CD8-positive, alpha-beta T cell (primary cell): ENCODE measurements at regions of chr15 and their contacts with region 1.

Region 1: GRCh38 chr15:63487076-63487757 is 17.2 kb upstream of the USP3 start:
- DNase-seq: peak; percentile 83 to 95 (median 88)
- ATAC-seq: peak; percentile 97
- H3K4me3 ChIP-seq: no peak overlapping the region
- H3K4me3 Mint-ChIP-seq: peak overlapping the region; percentile 40
- H3K27ac ChIP-seq: no peak overlapping the region
- H3K27ac Mint-ChIP-seq: peak overlapping the region; percentile 80
- H3K4me1 ChIP-seq: peaks cover 48% of the 10 kb centered on the region
- H3K4me1 Mint-ChIP-seq: peaks cover 62% of the 10 kb centered on the region
- H3K27me3 ChIP-seq: no peaks in the 10 kb centered on the region
- H3K27me3 Mint-ChIP-seq: no peaks in the 10 kb centered on the region
- CTCF ChIP-seq: peak; percentile 98

Region 2: DNA sequence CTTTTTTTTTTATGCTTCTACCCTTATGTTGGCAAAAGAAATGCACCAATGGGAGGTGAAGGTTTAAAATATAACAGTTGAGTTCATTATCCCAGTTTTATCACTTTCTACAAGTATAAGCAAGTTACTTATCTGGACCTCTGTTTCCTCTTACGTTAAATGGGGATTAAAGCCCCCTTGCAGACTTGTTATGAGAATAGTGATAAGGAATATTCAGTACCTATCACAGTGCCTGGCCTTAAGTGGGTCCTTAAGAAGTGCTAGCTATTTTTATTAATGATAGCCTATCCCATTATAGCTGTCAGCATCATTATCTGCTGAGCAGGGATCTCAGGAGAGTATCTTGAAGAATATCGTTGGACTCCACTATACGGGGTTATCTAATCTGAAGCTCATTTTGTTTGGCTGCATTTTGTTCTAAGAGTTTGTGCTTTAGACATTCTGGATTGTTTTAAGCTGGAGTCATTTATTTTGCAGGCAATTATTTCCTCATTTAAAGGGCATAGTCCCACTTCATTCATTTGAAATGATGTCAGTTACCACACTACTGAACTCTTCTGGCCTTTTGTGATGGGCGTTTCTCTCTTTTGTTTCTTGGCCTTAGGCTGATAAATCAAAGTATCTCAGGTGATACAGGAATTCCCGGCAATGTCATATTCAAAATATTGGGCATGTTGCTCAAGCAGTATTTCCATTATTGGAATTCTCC is 269.0 kb before region 1 on chr15:
- CTCF ChIA-PET with region 1: no interaction called
- POLR2A ChIA-PET with region 1: no interaction called
- intact Hi-C with region 1: no loop called
- DNase-seq: no peak
- ATAC-seq: no peak
- H3K4me3 ChIP-seq: no peak overlapping the region
- H3K4me3 Mint-ChIP-seq: no peak overlapping the region
- H3K27ac ChIP-seq: no peak overlapping the region
- H3K27ac Mint-ChIP-seq: no peak overlapping the region
- H3K4me1 ChIP-seq: peaks cover 2% of the 10 kb centered on the region
- H3K4me1 Mint-ChIP-seq: peaks cover 68% of the 10 kb centered on the region
- H3K27me3 ChIP-seq: no peaks in the 10 kb centered on the region
- H3K27me3 Mint-ChIP-seq: no peaks in the 10 kb centered on the region
- CTCF ChIP-seq: no peak

Region 3: GRCh38 chr15:63497642-63498467 is 10.6 kb after region 1 on chr15:
- CTCF ChIA-PET with region 1: interaction called, 92 read pairs
- POLR2A ChIA-PET with region 1: interaction called, 121 read pairs
- intact Hi-C with region 1: loop called in 1 of 2 experiments (anchors 1 kb)
- DNase-seq: peak; percentile 48 to 95 (median 79)
- ATAC-seq: peak; percentile 69
- H3K4me3 ChIP-seq: peak overlapping the region; percentile 28 to 37
- H3K4me3 Mint-ChIP-seq: no peak overlapping the region
- H3K27ac ChIP-seq: peak overlapping the region; percentile 57 to 94
- H3K27ac Mint-ChIP-seq: no peak overlapping the region
- H3K4me1 ChIP-seq: peaks cover 91% of the 10 kb centered on the region
- H3K4me1 Mint-ChIP-seq: peaks cover 79% of the 10 kb centered on the region
- H3K27me3 ChIP-seq: no peaks in the 10 kb centered on the region
- H3K27me3 Mint-ChIP-seq: no peaks in the 10 kb centered on the region
- CTCF ChIP-seq: no peak

Region 4: GRCh38 chr15:63522225-63522578 is 35.0 kb after region 1 on chr15:
- CTCF ChIA-PET with region 1: interaction called, 7 read pairs
- POLR2A ChIA-PET with region 1: interaction called, 3 read pairs
- intact Hi-C with region 1: loop called in 1 of 2 experiments (anchors 5 kb)
- DNase-seq: no peak
- ATAC-seq: no peak
- H3K4me3 ChIP-seq: no peak overlapping the region
- H3K4me3 Mint-ChIP-seq: peak overlapping the region; percentile 19
- H3K27ac ChIP-seq: no peak overlapping the region
- H3K27ac Mint-ChIP-seq: no peak overlapping the region
- H3K4me1 ChIP-seq: peaks cover 87% of the 10 kb centered on the region
- H3K4me1 Mint-ChIP-seq: peaks cover 91% of the 10 kb centered on the region
- H3K27me3 ChIP-seq: no peaks in the 10 kb centered on the region
- H3K27me3 Mint-ChIP-seq: no peaks in the 10 kb centered on the region
- CTCF ChIP-seq: no peak

Region 5: DNA sequence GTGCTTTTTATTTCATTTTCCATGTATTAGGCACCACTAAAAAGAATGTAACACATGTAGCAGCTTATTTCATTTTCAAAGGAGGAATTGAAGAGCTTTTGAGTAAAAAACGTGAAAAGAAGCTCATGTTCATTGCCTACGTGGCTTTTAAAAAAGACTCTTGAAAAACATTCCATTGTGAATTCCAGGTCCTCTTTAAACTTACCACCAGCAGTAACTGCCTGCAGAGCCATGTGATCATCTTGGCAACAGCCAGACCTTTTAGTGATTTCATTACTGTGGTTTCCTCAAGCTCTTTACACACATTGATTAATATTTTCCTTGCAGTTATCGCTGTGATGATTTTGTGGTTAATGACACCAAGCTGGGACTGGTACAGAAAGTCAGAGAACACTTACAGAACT is 66.2 kb after region 1 on chr15:
- CTCF ChIA-PET with region 1: interaction called, 10 read pairs
- POLR2A ChIA-PET with region 1: interaction called, 4 read pairs
- intact Hi-C with region 1: loop called in 1 of 2 experiments (anchors 5 kb)
- DNase-seq: peak in 1 of 9 experiments; percentile 35
- ATAC-seq: no peak
- H3K4me3 ChIP-seq: no peak overlapping the region
- H3K4me3 Mint-ChIP-seq: no peak overlapping the region
- H3K27ac ChIP-seq: peak overlapping the region in 1 of 2 experiments; percentile 22
- H3K27ac Mint-ChIP-seq: no peak overlapping the region
- H3K4me1 ChIP-seq: peaks cover 6% of the 10 kb centered on the region
- H3K4me1 Mint-ChIP-seq: peaks cover 46% of the 10 kb centered on the region
- H3K27me3 ChIP-seq: no peaks in the 10 kb centered on the region
- H3K27me3 Mint-ChIP-seq: no peaks in the 10 kb centered on the region
- CTCF ChIP-seq: no peak

Region 6: GRCh38 chr15:63600616-63601025 is 113.4 kb after region 1 on chr15:
- CTCF ChIA-PET with region 1: interaction called, 13 read pairs
- POLR2A ChIA-PET with region 1: interaction called, 4 read pairs
- intact Hi-C with region 1: no loop called
- DNase-seq: peak; percentile 79 to 98 (median 90)
- ATAC-seq: peak; percentile 80
- H3K4me3 ChIP-seq: peak overlapping the region; percentile 87 to 96
- H3K4me3 Mint-ChIP-seq: peak overlapping the region; percentile 94
- H3K27ac ChIP-seq: peak overlapping the region; percentile 75 to 87
- H3K27ac Mint-ChIP-seq: peak overlapping the region; percentile 94
- H3K4me1 ChIP-seq: peaks cover 29% of the 10 kb centered on the region
- H3K4me1 Mint-ChIP-seq: peaks cover 56% of the 10 kb centered on the region
- H3K27me3 ChIP-seq: no peaks in the 10 kb centered on the region
- H3K27me3 Mint-ChIP-seq: no peaks in the 10 kb centered on the region
- CTCF ChIP-seq: no peak

Region 7: DNA sequence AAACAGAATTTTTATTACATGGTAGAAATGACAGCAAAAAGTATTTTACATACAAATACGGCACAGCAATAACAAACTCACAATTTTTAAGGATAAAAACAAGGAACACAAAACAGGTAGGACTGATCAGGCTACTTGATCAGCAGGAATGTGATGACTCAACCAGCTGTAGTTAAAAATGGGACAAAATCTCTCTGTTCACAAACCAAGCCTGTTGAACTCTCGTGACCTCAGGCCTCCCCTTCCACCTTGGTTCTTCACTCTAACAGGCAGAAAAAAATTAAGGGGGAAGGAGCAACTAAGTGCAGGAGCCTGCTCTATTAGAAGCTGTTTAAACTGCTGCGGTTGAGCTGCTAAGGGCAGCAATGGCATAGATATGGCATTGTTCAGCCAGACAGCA is 128.7 kb after region 1 on chr15:
- CTCF ChIA-PET with region 1: no interaction called
- POLR2A ChIA-PET with region 1: no interaction called
- intact Hi-C with region 1: no loop called
- DNase-seq: no peak
- ATAC-seq: no peak
- H3K4me3 ChIP-seq: no peak overlapping the region
- H3K4me3 Mint-ChIP-seq: no peak overlapping the region
- H3K27ac ChIP-seq: no peak overlapping the region
- H3K27ac Mint-ChIP-seq: no peak overlapping the region
- H3K4me1 ChIP-seq: peaks cover 1% of the 10 kb centered on the region
- H3K4me1 Mint-ChIP-seq: peaks cover 14% of the 10 kb centered on the region
- H3K27me3 ChIP-seq: no peaks in the 10 kb centered on the region
- H3K27me3 Mint-ChIP-seq: no peaks in the 10 kb centered on the region
- CTCF ChIP-seq: no peak